CD4-positive, alpha-beta memory T cell (primary cell): ENCODE measurements at regions of chr9 and their contacts with region 1.

Region 1: GRCh38 chr9:117344892-117345659 is 69.8 kb downstream of the ASTN2 start:
- DNase-seq: no peak
- H3K4me3 ChIP-seq: no peak overlapping the region
- H3K4me3 Mint-ChIP-seq: no peak overlapping the region
- H3K27ac ChIP-seq: no peak overlapping the region
- H3K27ac Mint-ChIP-seq: no peak overlapping the region
- H3K4me1 ChIP-seq: no peaks in the 10 kb centered on the region
- H3K4me1 Mint-ChIP-seq: no peaks in the 10 kb centered on the region
- H3K27me3 ChIP-seq: no peaks in the 10 kb centered on the region
- H3K27me3 Mint-ChIP-seq: no peaks in the 10 kb centered on the region

Region 2: DNA sequence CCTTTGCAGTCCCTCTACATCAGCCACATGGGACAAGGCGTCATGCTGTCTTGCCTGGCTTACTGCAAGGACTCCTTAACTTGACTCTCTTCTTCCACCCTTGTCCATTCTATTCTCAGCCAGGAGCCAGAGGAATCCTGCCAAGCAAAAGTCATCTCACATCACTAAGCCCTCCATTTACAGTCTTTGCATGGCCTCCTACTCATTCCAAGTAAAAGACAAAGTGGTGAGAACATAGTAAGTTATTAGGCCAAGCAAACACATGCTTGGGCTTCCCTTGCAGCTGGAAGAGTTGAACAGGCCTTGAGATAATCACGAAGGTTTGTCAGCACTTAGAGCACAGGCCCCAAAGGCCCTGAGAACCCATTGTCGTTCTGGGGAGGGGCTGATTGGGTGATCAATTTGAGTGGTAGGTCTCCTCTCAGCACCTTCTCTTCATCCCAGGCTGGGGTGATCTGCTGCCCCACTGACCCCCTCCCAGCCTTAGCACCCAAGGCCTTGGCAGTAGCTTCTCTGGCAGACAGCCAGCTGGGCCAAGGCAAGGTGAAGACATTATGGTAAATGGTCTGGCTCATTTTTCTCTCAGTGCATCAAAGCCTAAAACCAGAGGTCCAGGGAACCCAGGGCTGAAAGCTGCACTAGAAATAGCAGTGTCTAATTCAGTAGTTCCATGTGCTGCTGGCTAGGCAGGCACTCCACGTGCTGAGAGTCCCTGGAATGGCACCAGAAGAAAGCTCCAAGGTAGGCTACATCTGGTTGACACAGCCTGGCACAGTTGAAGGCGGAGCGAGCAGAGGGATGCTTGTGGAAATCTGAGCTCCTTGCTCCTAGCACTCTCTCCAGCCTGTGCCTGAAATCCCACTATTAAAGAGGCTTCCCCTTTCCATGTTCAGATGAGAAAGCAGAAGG is 51.6 kb before region 1 on chr9:
- CTCF ChIA-PET with region 1: no interaction called
- POLR2A ChIA-PET with region 1: no interaction called
- intact Hi-C with region 1: loop called (anchors 2 kb)
- DNase-seq: no peak
- H3K4me3 ChIP-seq: no peak overlapping the region
- H3K4me3 Mint-ChIP-seq: no peak overlapping the region
- H3K27ac ChIP-seq: no peak overlapping the region
- H3K27ac Mint-ChIP-seq: no peak overlapping the region
- H3K4me1 ChIP-seq: no peaks in the 10 kb centered on the region
- H3K4me1 Mint-ChIP-seq: no peaks in the 10 kb centered on the region
- H3K27me3 ChIP-seq: no peaks in the 10 kb centered on the region
- H3K27me3 Mint-ChIP-seq: no peaks in the 10 kb centered on the region

Region 3: GRCh38 chr9:117387422-117387821 is 42.3 kb after region 1 on chr9:
- CTCF ChIA-PET with region 1: no interaction called
- POLR2A ChIA-PET with region 1: no interaction called
- intact Hi-C with region 1: no loop called
- DNase-seq: no peak
- H3K4me3 ChIP-seq: no peak overlapping the region
- H3K4me3 Mint-ChIP-seq: no peak overlapping the region
- H3K27ac ChIP-seq: no peak overlapping the region
- H3K27ac Mint-ChIP-seq: no peak overlapping the region
- H3K4me1 ChIP-seq: no peaks in the 10 kb centered on the region
- H3K4me1 Mint-ChIP-seq: no peaks in the 10 kb centered on the region
- H3K27me3 ChIP-seq: no peaks in the 10 kb centered on the region
- H3K27me3 Mint-ChIP-seq: no peaks in the 10 kb centered on the region